AG04449 (cell line): ENCODE measurements at regions of chr1 and their contacts with region 1.

Region 1: GRCh38 chr1:112460615-112461014 is 48.1 kb upstream of the WNT2B start:
- DNase-seq: no peak
- H3K4me3 ChIP-seq: no peak overlapping the region
- CTCF ChIP-seq: no peak

Region 2: DNA sequence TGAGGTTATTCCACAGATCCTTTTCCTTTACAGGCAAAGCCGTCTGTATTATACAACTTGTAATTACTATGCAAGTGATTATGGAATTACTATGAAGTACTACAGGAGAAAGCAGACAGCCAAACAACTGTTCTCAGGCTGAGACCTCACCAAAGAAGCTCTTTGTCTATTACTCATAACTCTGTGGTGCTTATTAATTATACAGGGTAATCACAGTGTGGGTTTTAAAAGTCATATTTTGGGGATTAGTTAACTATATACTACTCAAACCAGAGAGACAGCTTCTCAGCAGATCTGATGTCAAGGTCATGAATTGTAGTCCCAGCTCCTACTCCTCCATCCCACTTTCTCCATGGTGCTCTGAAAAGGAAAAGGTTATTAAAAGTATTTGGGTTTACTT is 15.0 kb before region 1 on chr1:
- CTCF ChIA-PET with region 1: interaction called, 10 read pairs
- POLR2A ChIA-PET with region 1: interaction called, 10 read pairs
- DNase-seq: no peak
- H3K4me3 ChIP-seq: no peak overlapping the region
- CTCF ChIP-seq: no peak

Region 3: GRCh38 chr1:112826212-112826950 is 365.8 kb after region 1 on chr1:
- CTCF ChIA-PET with region 1: no interaction called
- POLR2A ChIA-PET with region 1: no interaction called
- DNase-seq: no peak
- H3K4me3 ChIP-seq: no peak overlapping the region
- CTCF ChIP-seq: no peak